Activated CD8-positive, alpha-beta T cell treated with anti-CD3 and anti-CD28 coated beads for 36 hours (primary cell): ENCODE measurements at regions of chr22 and their contacts with region 1.

Region 1: GRCh38 chr22:23767673-23768548 is at the start of gene CHCHD10:
- DNase-seq: peak; percentile 85
- ATAC-seq: peak; percentile 66
- H3K4me3 Mint-ChIP-seq: peak within 1 kb of the TSS; percentile 81
- H3K27ac Mint-ChIP-seq: peak within 1 kb of the TSS; percentile 81
- H3K4me1 Mint-ChIP-seq: peaks cover 41% of the 10 kb centered on the region
- H3K27me3 Mint-ChIP-seq: no peaks in the 10 kb centered on the region
- CTCF ChIP-seq: peak; percentile 85
- total RNA-seq, gene CHCHD10: 197 to 212 TPM

Region 2: GRCh38 chr22:23696326-23696851 is 71.5 kb before region 1 on chr22:
- CTCF ChIA-PET with region 1: interaction called, 5 read pairs
- POLR2A ChIA-PET with region 1: interaction called, 11 read pairs
- intact Hi-C with region 1: no loop called
- DNase-seq: peak; percentile 93
- ATAC-seq: peak; percentile 99
- H3K4me3 Mint-ChIP-seq: peak overlapping the region; percentile 80
- H3K27ac Mint-ChIP-seq: peak overlapping the region; percentile 100
- H3K4me1 Mint-ChIP-seq: peaks cover 48% of the 10 kb centered on the region
- H3K27me3 Mint-ChIP-seq: no peaks in the 10 kb centered on the region
- CTCF ChIP-seq: no peak

Region 3: GRCh38 chr22:23750714-23751440 is 17.0 kb before region 1 on chr22 and contains the start of gene ZNF70:
- CTCF ChIA-PET with region 1: interaction called, 3 read pairs
- POLR2A ChIA-PET with region 1: interaction called, 19 read pairs
- intact Hi-C with region 1: no loop called
- DNase-seq: peak; percentile 90
- ATAC-seq: peak; percentile 98
- H3K4me3 Mint-ChIP-seq: peak within 1 kb of the TSS; percentile 80
- H3K27ac Mint-ChIP-seq: peak within 1 kb of the TSS; percentile 79
- H3K4me1 Mint-ChIP-seq: peaks cover 15% of the 10 kb centered on the region
- H3K27me3 Mint-ChIP-seq: no peaks in the 10 kb centered on the region
- CTCF ChIP-seq: no peak
- total RNA-seq, gene ZNF70: 1.7 TPM

Region 4: DNA sequence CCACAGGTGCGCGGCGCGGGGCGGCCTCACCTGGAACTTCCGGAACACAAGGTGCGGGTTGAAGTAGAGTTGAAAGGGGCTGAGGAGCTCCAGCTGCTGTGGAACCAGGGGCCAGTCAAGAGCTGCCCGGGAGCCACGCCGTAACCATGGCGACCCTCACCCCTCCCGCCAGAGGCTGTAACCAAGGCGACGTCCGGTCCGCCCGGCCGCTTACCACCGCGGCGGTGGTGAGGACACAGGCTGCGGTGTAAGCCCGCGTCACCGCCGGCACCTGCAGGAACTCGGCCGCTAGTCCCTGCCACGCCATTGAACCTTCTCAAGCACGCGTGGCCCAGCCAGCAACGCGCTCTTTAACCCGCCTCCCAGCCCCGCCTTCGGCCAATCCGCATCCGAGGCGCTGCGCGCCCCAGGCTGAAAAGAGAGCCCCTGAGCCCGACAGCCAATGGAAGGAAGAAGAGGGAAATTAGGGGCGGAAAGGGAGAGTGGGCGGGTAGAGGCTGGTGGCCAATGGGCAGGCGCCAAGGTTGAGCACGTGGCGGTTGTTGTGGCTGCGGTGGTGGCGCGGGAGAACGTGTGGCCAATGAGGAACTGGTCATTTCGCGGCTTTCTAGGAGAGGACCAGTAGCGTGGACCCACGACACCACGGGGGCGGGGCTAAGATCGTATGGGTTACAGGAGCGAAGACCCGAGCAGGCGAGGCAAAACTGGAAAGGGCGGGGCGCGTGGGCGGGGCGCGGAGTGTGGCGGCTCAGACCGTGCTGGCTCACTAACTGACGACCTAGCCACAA is 71.0 kb after region 1 on chr22 and contains the start of gene DERL3:
- CTCF ChIA-PET with region 1: no interaction called
- POLR2A ChIA-PET with region 1: no interaction called
- intact Hi-C with region 1: loop called (anchors 5 kb)
- DNase-seq: peak; percentile 99
- ATAC-seq: peak; percentile 92
- H3K4me3 Mint-ChIP-seq: peak within 1 kb of the TSS; percentile 81
- H3K27ac Mint-ChIP-seq: peak within 1 kb of the TSS; percentile 81
- H3K4me1 Mint-ChIP-seq: peaks cover 20% of the 10 kb centered on the region
- H3K27me3 Mint-ChIP-seq: peaks cover 2% of the 10 kb centered on the region
- CTCF ChIP-seq: no peak
- total RNA-seq, gene DERL3: 5.4 to 7.6 TPM

Region 5: GRCh38 chr22:23857606-23858483 is 89.9 kb after region 1 on chr22 and contains the start of gene SLC2A11:
- CTCF ChIA-PET with region 1: interaction called, 48 read pairs
- POLR2A ChIA-PET with region 1: interaction called, 3 read pairs
- intact Hi-C with region 1: no loop called
- DNase-seq: peak; percentile 97
- ATAC-seq: peak; percentile 97
- H3K4me3 Mint-ChIP-seq: peak within 1 kb of the TSS; percentile 90
- H3K27ac Mint-ChIP-seq: peak within 1 kb of the TSS; percentile 75
- H3K4me1 Mint-ChIP-seq: peaks cover 11% of the 10 kb centered on the region
- H3K27me3 Mint-ChIP-seq: no peaks in the 10 kb centered on the region
- CTCF ChIP-seq: peak; percentile 25
- total RNA-seq, gene SLC2A11: 8.0 to 8.6 TPM